ENCODE measurements at regions of chr4 and their contacts with region 1.

Region 1: GRCh38 chr4:143335979-143336780 is 496 bp upstream of the GAB1 start:
- DNase-seq: peak; percentile 93
- ATAC-seq: peak; percentile 87 to 93

Region 2: GRCh38 chr4:143207557-143207956 is 128.6 kb before region 1 on chr4:
- intact Hi-C with region 1: loop called in 1 of 2 experiments (anchors 10 kb)
- DNase-seq: no peak
- ATAC-seq: peak; percentile 50 to 62

Region 3: GRCh38 chr4:143215873-143216272 is 120.3 kb before region 1 on chr4:
- intact Hi-C with region 1: loop called in 1 of 2 experiments (anchors 5 kb)
- DNase-seq: no peak
- ATAC-seq: peak in 1 of 2 donors; percentile 65

Region 4: DNA sequence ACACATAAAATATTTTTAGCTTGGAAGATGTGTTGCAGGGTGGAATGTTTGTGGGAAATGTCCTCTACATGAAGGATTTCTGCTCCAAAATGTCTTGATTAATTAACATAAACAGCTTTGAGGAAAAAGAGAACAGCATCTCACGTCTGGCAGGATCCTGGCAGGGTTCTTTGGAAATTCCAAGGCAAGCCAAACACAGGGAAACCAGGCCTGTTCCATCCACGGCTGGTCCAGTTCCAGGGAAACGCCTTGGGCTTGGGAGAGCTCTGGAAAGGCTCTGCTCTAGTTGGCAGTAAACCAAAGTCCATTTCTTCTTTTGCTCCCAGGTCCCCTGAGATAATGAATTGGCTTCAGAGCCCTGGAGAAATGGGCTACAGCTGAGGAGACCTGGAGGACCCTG is 41.9 kb before region 1 on chr4:
- intact Hi-C with region 1: loop called in 1 of 2 experiments (anchors 5 kb)
- DNase-seq: peak; percentile 88
- ATAC-seq: peak; percentile 95 to 96

Region 5: DNA sequence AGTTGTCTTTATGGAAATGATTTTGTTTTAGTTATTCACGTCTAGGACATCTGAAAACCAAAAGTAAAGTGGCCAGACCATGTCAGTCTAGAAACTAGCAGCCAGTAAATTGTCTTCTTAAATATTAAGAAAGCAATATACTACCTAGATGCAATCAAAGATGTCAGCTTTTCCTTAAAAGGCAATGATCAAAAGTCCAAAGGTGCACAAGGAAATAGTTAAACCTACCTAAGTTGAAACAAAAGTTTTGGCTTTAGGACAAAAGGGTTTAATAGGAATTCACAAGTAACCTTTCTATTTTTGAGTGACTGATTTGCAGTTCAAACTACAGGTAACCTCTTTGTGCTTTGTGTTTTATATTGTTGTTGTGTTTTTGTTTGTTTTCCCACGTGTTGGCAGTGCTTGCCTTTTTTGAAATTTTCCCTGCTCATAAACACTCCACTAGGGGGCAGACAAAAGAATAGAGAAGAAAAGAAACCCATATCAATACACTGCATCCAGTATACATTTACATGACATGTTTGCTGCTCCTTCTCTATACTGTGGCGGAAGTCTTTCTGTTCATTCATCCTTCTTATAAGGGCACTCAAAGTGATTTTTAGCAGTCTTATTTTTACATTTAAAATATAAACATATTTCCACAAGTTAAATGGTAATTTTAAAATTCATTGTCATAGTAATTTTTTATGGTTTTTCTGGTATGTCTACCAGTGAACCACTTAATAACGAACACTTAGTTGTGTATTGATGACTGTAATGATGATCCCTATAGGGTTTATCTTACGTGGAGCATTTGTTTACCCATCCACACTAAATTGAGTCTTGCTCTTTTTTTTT is 63.2 kb after region 1 on chr4:
- intact Hi-C with region 1: loop called in 1 of 2 experiments (anchors 5 kb)
- DNase-seq: no peak
- ATAC-seq: no peak

Region 6: GRCh38 chr4:143411527-143412480 is 75.6 kb after region 1 on chr4:
- intact Hi-C with region 1: loop called in 1 of 2 experiments (anchors 5 kb)
- DNase-seq: no peak
- ATAC-seq: peak; percentile 61 to 70

Region 7: DNA sequence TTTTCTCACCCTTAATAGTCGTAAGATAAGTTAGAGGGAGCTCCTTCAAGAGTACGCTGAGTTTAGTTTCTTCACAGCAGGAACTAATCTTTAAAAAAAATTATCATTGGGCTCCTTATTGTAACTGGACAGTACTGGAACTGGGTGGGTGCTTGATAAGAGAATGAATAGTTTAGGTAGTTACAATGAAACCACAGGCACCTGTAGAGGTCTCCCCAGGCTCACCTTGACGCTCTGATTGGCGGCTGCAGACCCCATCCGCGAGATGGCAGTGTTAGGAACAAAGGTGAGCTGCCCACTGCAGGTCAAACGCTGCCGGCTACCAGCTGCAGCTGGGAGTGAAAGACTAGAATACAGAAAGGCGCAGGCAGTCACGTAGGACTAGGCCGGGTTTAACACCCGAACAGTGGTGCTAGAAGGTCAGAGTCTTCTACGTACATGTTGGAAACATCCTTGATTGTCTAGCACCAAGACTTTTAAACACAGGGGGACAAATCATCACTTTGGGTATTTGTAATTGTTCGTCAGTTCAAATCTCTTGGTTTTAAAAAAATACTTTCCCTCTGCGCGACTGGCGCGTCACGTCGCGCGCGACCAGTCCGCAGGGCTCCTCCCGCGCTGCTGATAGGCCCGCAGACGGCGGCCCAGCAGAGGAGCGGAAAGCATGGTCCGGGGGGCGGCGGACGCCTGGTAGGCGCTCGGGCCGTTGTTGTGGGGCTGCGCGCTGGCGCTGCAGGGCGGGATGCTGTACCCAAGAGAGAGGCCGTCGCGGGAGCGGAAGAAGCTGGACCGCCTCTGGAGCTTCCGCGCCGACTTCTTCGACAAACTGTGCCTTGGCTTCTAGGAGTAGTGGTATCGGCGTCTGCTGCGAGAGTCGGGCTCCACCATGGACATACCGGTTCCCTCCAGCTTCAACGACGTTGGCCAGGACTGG is 222.9 kb after region 1 on chr4:
- intact Hi-C with region 1: no loop called
- DNase-seq: peak; percentile 68
- ATAC-seq: peak; percentile 90 to 93

Measured in left cardiac atrium (tissue), 4 donors.